Activated CD4-positive, alpha-beta T cell treated with anti-CD3 and anti-CD28 coated beads for 36 hours (primary cell): ENCODE measurements at regions of chr21 and their contacts with region 1.

Region 1: DNA sequence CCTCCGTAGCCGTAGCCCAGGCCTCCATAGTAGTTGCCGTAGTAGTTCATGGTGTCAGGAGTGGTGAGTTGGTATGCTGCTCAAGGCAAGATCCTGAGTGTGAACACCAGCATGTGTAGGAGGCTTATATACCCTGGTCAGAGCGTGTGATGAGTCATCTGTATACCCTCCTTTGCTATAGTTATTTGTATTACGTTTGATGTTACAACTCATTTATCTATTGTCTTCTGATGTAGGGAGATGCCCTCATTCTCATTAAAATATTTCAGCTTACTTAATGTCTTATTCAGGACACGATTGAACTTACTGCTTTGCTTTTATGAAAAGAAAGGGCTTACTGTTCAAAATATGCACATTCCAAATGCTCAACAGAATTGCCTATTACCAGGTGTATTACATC is at the start of gene KRTAP19-5:
- DNase-seq: no peak
- ATAC-seq: no peak
- H3K4me3 Mint-ChIP-seq: no peak within 1 kb of the TSS
- H3K27ac Mint-ChIP-seq: no peak within 1 kb of the TSS
- H3K4me1 Mint-ChIP-seq: no peaks in the 10 kb centered on the region
- H3K27me3 Mint-ChIP-seq: no peaks in the 10 kb centered on the region
- total RNA-seq, gene KRTAP19-5: not detected

Region 2: DNA sequence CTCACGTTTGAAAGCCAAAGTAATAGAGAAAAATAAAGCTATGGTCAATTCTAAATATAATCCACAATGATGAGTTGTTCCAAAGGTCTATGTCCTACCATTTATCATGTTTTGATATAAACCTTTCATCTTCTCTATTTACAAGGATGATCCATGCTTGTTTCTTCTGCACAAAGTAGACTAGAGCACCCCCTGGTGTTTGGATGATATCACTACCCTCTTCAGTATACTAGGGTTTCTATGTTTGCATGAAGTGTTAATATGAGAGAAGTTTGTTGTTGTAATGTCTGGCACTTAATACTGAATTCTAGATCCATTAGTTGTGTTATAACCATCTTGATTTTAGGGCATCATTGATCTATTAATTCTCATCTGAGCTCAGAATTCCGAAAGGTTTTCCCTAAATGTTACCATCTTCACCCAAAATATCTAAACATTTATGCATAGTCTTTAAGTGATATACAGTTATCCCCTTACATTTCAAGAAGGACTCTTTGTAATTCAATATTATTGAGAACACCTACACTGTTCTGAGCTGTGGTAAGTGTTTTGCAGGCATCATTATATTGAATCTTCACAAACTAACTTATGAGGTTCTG is 307.2 kb before region 1 on chr21:
- CTCF ChIA-PET with region 1: no interaction called
- POLR2A ChIA-PET with region 1: no interaction called
- intact Hi-C with region 1: no loop called
- DNase-seq: peak; percentile 32
- ATAC-seq: peak; percentile 60
- H3K4me3 Mint-ChIP-seq: no peak overlapping the region
- H3K27ac Mint-ChIP-seq: no peak overlapping the region
- H3K4me1 Mint-ChIP-seq: no peaks in the 10 kb centered on the region
- H3K27me3 Mint-ChIP-seq: peaks cover 2% of the 10 kb centered on the region

Region 3: DNA sequence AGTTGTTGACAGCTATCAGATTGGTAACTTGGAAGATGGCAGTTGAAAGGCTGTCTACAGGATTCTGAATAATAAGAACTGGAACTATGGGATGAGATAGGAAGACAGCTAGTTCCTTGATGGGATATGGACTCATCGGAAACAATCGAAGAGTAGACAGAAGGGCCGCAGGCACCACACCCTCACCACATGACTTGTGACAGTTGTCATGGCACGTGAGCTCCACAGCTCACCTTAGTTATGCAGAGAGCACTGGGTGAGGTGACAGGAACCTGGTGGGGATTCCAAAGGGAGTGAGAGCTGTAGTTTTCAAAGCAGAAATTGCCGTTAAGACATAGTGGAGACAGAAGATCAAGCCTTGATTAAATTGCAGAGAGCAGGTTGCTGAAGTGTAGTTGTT is 204.6 kb before region 1 on chr21:
- CTCF ChIA-PET with region 1: no interaction called
- POLR2A ChIA-PET with region 1: no interaction called
- intact Hi-C with region 1: no loop called
- DNase-seq: no peak
- ATAC-seq: no peak
- H3K4me3 Mint-ChIP-seq: no peak overlapping the region
- H3K27ac Mint-ChIP-seq: no peak overlapping the region
- H3K4me1 Mint-ChIP-seq: no peaks in the 10 kb centered on the region
- H3K27me3 Mint-ChIP-seq: peaks cover 4% of the 10 kb centered on the region

Region 4: DNA sequence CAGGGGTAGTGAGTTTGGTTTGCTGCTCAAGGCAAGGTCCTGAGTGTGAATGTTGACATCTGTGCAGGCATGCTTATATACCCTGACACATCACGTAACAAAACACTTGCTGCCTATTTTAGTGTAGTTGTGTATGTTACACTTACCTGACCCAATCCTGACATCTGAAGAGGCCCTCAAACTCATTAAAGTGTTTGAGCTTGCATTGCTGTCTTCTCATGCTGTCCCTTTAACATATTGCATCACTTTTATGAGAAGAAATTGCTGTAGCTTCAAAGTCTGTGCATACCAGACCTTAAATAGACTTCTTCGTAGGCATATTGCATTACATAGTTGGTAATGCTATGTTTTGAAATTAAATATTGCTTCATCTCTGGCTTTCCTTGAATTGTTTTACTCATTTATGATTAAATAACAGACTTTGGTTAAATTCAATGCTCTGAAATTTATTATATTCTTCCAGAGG is 10.0 kb before region 1 on chr21 and contains the start of gene KRTAP19-3:
- CTCF ChIA-PET with region 1: interaction called, 16 read pairs
- POLR2A ChIA-PET with region 1: no interaction called
- intact Hi-C with region 1: no loop called
- DNase-seq: no peak
- ATAC-seq: no peak
- H3K4me3 Mint-ChIP-seq: no peak within 1 kb of the TSS
- H3K27ac Mint-ChIP-seq: no peak within 1 kb of the TSS
- H3K4me1 Mint-ChIP-seq: no peaks in the 10 kb centered on the region
- H3K27me3 Mint-ChIP-seq: peaks cover 2% of the 10 kb centered on the region
- total RNA-seq, gene KRTAP19-3: not detected

Region 5: GRCh38 chr21:30733026-30733425 is 231.0 kb after region 1 on chr21:
- CTCF ChIA-PET with region 1: no interaction called
- POLR2A ChIA-PET with region 1: no interaction called
- intact Hi-C with region 1: loop called in 1 of 2 experiments (anchors 1 kb)
- DNase-seq: no peak
- ATAC-seq: no peak
- H3K4me3 Mint-ChIP-seq: no peak overlapping the region
- H3K27ac Mint-ChIP-seq: no peak overlapping the region
- H3K4me1 Mint-ChIP-seq: no peaks in the 10 kb centered on the region
- H3K27me3 Mint-ChIP-seq: peaks cover 6% of the 10 kb centered on the region